Tibial artery (tissue), 4 donors: ENCODE measurements at regions of chr5 and their contacts with region 1.

Region 1: GRCh38 chr5:56270568-56271392 is 37.6 kb upstream of the ANKRD55 start:
- DNase-seq: peak; percentile 77 to 88
- H3K4me3 ChIP-seq: no peak overlapping the region
- H3K27ac ChIP-seq: no peak overlapping the region
- H3K4me1 ChIP-seq: peaks cover 0 to 5% (median 2%) of the 10 kb centered on the region in 4 donors
- H3K27me3 ChIP-seq: no peaks in the 10 kb centered on the region
- CTCF ChIP-seq: peak; percentile 98 to 99

Region 2: DNA sequence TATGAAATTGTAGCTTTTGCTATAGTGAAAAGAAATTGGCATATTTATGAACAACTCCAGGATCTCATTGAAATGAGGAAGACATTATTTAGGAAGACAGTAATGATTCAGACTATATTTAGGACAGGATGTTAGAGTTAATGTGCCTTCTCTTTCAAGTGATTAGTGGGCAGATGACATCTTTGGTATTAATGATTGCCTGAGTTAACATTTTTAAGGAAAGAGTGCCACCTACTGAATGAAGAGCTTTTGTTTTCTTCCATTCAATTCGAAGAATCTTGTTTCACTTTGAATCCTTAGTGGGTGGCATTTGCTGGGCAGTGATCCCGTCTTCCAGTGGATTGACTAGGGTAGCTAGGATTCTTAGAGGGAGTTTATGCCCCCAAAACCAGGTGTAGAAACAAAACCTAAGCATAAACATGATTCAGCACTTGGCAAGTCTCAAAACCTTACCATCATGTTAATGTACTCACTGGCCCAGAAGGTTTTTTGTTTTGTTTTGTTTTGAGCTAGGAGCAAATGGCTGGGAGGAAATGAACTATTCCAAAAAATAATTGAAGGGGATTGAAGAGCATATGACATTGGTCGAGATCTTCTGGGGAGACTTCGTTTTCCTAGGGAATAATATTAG is 567.7 kb after region 1 on chr5:
- intact Hi-C with region 1: loop called (anchors 2 kb)
- DNase-seq: no peak
- H3K4me3 ChIP-seq: no peak overlapping the region
- H3K27ac ChIP-seq: peak overlapping the region in 1 of 2 donors; percentile 22
- H3K4me1 ChIP-seq: peaks cover 0 to 5% (median 2%) of the 10 kb centered on the region in 4 donors
- H3K27me3 ChIP-seq: no peaks in the 10 kb centered on the region
- CTCF ChIP-seq: peak; percentile 52 to 76